ENCODE measurements at regions of chrX and their contacts with region 1.

Region 1: GRCh38 chrX:2640275-2641150 is 50.6 kb upstream of the CD99 start:
- DNase-seq: no peak
- ATAC-seq: no peak
- H3K4me3 ChIP-seq: no peak overlapping the region
- H3K27ac ChIP-seq: no peak overlapping the region
- H3K4me1 ChIP-seq: no peaks in the 10 kb centered on the region
- H3K27me3 ChIP-seq: no peaks in the 10 kb centered on the region
- CTCF ChIP-seq: no peak

Region 2: DNA sequence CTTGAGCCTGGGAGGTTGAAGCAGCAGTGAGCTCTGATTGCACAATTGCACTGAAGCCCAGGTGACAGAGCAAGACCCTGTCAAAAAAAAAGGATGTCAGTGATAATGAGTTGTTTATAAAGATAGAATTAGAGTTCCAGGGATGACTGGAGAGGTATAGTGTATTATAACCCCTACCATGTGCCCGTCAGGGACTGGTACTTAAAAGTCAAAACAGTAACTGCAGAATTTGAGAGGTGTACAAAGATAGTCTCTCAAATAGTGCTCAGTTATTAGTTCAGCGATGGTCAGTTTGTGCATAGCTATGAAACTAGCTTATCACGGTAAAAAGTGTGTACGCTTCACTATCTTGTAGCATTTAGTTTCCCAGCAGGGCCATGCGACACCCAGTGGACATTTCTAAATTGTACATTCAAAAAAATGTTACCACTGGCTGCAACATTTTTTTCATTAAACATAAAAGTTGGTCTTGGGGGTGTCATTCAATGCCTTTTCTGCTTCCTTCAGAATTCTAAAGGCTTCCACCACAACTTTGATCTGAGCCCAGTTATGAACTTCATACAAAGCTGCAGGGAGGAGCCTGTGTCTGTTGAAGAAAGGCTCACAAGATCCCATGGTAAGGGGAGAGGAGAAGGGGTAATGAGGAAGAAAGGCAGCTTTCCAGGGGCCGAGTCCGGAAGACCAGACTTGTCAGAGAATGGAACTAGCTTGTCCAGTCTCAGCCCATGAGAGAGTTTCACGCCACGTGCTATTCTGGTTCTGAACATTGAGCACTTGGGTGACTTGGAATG is 179.0 kb after region 1 on chrX:
- CTCF ChIA-PET with region 1: no interaction called
- POLR2A ChIA-PET with region 1: no interaction called
- in situ Hi-C with region 1: no loop called
- intact Hi-C with region 1: loop called (anchors 5 kb)
- DNase-seq: no peak
- ATAC-seq: peak; percentile 60; the same call in 1 of the 2 replicates
- H3K4me3 ChIP-seq: no peak overlapping the region
- H3K27ac ChIP-seq: no peak overlapping the region
- H3K4me1 ChIP-seq: no peaks in the 10 kb centered on the region
- H3K27me3 ChIP-seq: no peaks in the 10 kb centered on the region; the same call in 1 of the 2 replicates
- CTCF ChIP-seq: peak; percentile 73